PC-3 (cell line): ENCODE measurements at regions of chr6 and their contacts with region 1.

Region 1: GRCh38 chr6:167907837-167908681 is 81.3 kb downstream of the AFDN start:
- DNase-seq: peak; percentile 65
- ATAC-seq: peak; percentile 77
- H3K4me3 ChIP-seq: no peak overlapping the region
- H3K27ac ChIP-seq: no peak overlapping the region
- H3K4me1 ChIP-seq: no peaks in the 10 kb centered on the region
- H3K27me3 ChIP-seq: no peaks in the 10 kb centered on the region
- CTCF ChIP-seq: peak; percentile 63

Region 2: DNA sequence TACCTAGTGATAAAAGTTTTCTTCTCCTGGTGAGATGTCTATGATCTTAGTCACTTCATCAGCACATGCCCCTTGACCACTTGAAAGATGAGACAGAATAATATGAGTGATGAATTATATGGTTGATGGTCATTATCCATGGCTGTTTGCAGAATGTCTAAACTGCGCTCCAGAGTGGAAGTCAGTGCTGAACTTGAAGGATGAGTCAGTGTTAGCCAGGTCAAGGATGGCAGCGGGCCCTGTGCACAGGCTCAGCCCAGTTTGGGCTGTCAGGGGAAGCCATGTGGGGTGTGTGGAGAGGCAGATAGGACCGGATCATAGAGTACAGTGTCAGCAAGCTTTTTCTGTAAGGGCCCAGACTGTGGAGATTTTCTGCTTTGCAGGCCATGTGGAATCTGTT is 22.2 kb after region 1 on chr6:
- CTCF ChIA-PET with region 1: no interaction called
- POLR2A ChIA-PET with region 1: no interaction called
- intact Hi-C with region 1: loop called (anchors 1 kb)
- DNase-seq: peak; percentile 80
- ATAC-seq: peak; percentile 99
- H3K4me3 ChIP-seq: no peak overlapping the region
- H3K27ac ChIP-seq: no peak overlapping the region
- H3K4me1 ChIP-seq: peaks cover 18% of the 10 kb centered on the region
- H3K27me3 ChIP-seq: no peaks in the 10 kb centered on the region
- CTCF ChIP-seq: no peak

Region 3: GRCh38 chr6:167996424-167997199 is 88.6 kb after region 1 on chr6:
- CTCF ChIA-PET with region 1: no interaction called
- POLR2A ChIA-PET with region 1: no interaction called
- intact Hi-C with region 1: no loop called
- DNase-seq: no peak
- ATAC-seq: no peak
- H3K4me3 ChIP-seq: no peak overlapping the region
- H3K27ac ChIP-seq: no peak overlapping the region
- H3K4me1 ChIP-seq: no peaks in the 10 kb centered on the region
- H3K27me3 ChIP-seq: 0 out of 2 replicates have a peak, but pooled peaks cover 8% of the 10 kb centered on the region
- CTCF ChIP-seq: no peak

Region 4: GRCh38 chr6:168025831-168026710 is 118.0 kb after region 1 on chr6:
- CTCF ChIA-PET with region 1: interaction called, 11 read pairs
- POLR2A ChIA-PET with region 1: no interaction called
- intact Hi-C with region 1: no loop called
- DNase-seq: no peak
- ATAC-seq: no peak
- H3K4me3 ChIP-seq: no peak overlapping the region
- H3K27ac ChIP-seq: no peak overlapping the region
- H3K4me1 ChIP-seq: peaks cover 7% of the 10 kb centered on the region
- H3K27me3 ChIP-seq: no peaks in the 10 kb centered on the region
- CTCF ChIP-seq: no peak

Region 5: GRCh38 chr6:168107212-168107983 is 199.3 kb after region 1 on chr6:
- CTCF ChIA-PET with region 1: no interaction called
- POLR2A ChIA-PET with region 1: no interaction called
- intact Hi-C with region 1: no loop called
- DNase-seq: no peak
- ATAC-seq: no peak
- H3K4me3 ChIP-seq: no peak overlapping the region
- H3K27ac ChIP-seq: no peak overlapping the region
- H3K4me1 ChIP-seq: no peaks in the 10 kb centered on the region
- H3K27me3 ChIP-seq: peaks cover 9% of the 10 kb centered on the region
- CTCF ChIP-seq: no peak

Region 6: GRCh38 chr6:168132531-168133167 is 224.6 kb after region 1 on chr6:
- CTCF ChIA-PET with region 1: no interaction called
- POLR2A ChIA-PET with region 1: no interaction called
- intact Hi-C with region 1: loop called (anchors 1 kb)
- DNase-seq: peak; percentile 47
- ATAC-seq: peak; percentile 73
- H3K4me3 ChIP-seq: no peak overlapping the region; the same call in 1 of the 2 replicates
- H3K27ac ChIP-seq: no peak overlapping the region
- H3K4me1 ChIP-seq: no peaks in the 10 kb centered on the region
- H3K27me3 ChIP-seq: peaks cover 9% of the 10 kb centered on the region
- CTCF ChIP-seq: peak; percentile 48